Activated B cell treated with CpG ODN at 0.5 μM for 24 hours (primary cell): ENCODE measurements at regions of chr10 and their contacts with region 1.

Region 1: DNA sequence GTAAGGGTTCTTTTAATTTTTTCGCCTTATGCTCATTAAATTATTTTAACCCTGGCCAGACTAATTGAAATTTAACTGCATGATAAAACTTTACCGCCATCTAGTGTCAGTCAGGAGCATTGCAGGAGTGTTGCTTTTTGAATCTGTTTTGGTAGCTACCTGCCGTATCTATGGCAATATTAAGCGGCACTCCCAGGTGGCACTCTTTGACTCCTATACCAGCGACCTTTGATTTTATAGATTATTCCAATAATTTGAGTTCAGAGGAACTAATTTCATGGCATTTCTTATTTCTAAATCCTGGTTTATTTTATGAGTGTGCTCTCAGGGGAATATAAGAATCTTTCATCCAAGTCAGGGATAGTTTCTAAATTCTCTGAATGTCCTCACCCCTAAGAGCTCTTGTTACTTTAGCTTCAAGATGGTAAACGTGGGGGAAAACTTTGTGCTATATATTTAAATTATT is 198.9 kb downstream of the REEP3 start:
- DNase-seq: no peak
- ATAC-seq: peak; percentile 94
- H3K4me3 Mint-ChIP-seq: no peak overlapping the region
- H3K27ac Mint-ChIP-seq: no peak overlapping the region
- H3K4me1 Mint-ChIP-seq: peaks cover 12% of the 10 kb centered on the region
- H3K27me3 Mint-ChIP-seq: peaks cover 12% of the 10 kb centered on the region
- CTCF ChIP-seq: peak; percentile 100

Region 2: GRCh38 chr10:62492012-62492869 is 1227.9 kb before region 1 on chr10:
- CTCF ChIA-PET with region 1: interaction called, 10 read pairs
- POLR2A ChIA-PET with region 1: no interaction called
- intact Hi-C with region 1: no loop called
- DNase-seq: no peak
- ATAC-seq: peak; percentile 49
- H3K4me3 Mint-ChIP-seq: no peak overlapping the region
- H3K27ac Mint-ChIP-seq: no peak overlapping the region
- H3K4me1 Mint-ChIP-seq: peaks cover 27% of the 10 kb centered on the region
- H3K27me3 Mint-ChIP-seq: peaks cover 4% of the 10 kb centered on the region
- CTCF ChIP-seq: no peak

Region 3: DNA sequence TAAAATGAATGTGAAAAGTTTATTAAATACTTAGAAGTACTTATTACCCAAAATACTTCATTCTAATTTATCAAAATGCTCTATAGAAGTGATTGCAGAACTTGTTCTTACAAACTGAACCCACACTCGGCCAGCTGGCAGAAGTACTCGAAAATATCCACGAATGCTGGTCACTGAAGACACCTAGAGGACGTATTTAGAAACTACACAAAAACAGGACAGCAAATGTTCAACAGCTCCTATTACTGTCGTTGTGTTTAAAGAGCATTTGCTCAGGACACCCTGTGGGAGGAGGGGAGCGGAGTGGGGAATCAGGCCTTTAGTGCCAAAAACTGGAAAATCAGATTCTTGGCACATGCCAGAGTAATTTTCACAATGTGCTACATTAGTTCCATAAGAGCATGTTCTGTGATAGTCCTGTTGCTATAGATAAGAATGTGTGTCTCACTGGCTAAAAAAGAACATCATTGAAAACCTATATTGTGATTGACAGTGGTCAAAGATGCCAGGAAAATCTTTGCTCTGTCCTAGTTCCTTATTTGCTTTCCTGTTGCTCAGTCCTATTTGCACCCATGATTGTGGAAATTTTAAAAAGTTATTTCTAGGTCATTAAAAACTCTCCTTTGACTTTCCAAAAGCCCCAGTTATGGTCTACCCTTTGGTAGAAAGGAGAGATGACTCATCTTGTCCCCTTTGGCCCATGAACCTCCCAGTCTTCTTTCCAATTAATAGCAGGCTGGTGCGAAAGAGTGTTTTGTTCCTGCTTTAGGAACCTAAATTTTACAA is 636.0 kb before region 1 on chr10:
- CTCF ChIA-PET with region 1: interaction called, 12 read pairs
- POLR2A ChIA-PET with region 1: no interaction called
- intact Hi-C with region 1: no loop called
- DNase-seq: no peak
- ATAC-seq: peak; percentile 77
- H3K4me3 Mint-ChIP-seq: no peak overlapping the region
- H3K27ac Mint-ChIP-seq: no peak overlapping the region
- H3K4me1 Mint-ChIP-seq: no peaks in the 10 kb centered on the region
- H3K27me3 Mint-ChIP-seq: peaks cover 9% of the 10 kb centered on the region
- CTCF ChIP-seq: peak; percentile 53

Region 4: GRCh38 chr10:63200431-63200830 is 519.7 kb before region 1 on chr10:
- CTCF ChIA-PET with region 1: interaction called, 23 read pairs
- POLR2A ChIA-PET with region 1: no interaction called
- intact Hi-C with region 1: no loop called
- DNase-seq: no peak
- ATAC-seq: no peak
- H3K4me3 Mint-ChIP-seq: no peak overlapping the region
- H3K27ac Mint-ChIP-seq: no peak overlapping the region
- H3K4me1 Mint-ChIP-seq: peaks cover 30% of the 10 kb centered on the region
- H3K27me3 Mint-ChIP-seq: no peaks in the 10 kb centered on the region
- CTCF ChIP-seq: no peak

Region 5: GRCh38 chr10:63465293-63466143 is 254.6 kb before region 1 on chr10 and contains the start of gene JMJD1C:
- CTCF ChIA-PET with region 1: interaction called, 3 read pairs
- POLR2A ChIA-PET with region 1: no interaction called
- intact Hi-C with region 1: loop called (anchors 1 kb)
- DNase-seq: peak; percentile 74
- ATAC-seq: peak; percentile 74
- H3K4me3 Mint-ChIP-seq: peak within 1 kb of the TSS; percentile 97
- H3K27ac Mint-ChIP-seq: peak within 1 kb of the TSS; percentile 92
- H3K4me1 Mint-ChIP-seq: peaks cover 20% of the 10 kb centered on the region
- H3K27me3 Mint-ChIP-seq: no peaks in the 10 kb centered on the region
- CTCF ChIP-seq: no peak
- total RNA-seq, gene JMJD1C: 167 and 176 TPM in 2 replicates

Region 6: GRCh38 chr10:63651864-63652263 is 68.2 kb before region 1 on chr10:
- CTCF ChIA-PET with region 1: no interaction called
- POLR2A ChIA-PET with region 1: no interaction called
- intact Hi-C with region 1: no loop called
- DNase-seq: no peak
- ATAC-seq: no peak
- H3K4me3 Mint-ChIP-seq: no peak overlapping the region
- H3K27ac Mint-ChIP-seq: no peak overlapping the region
- H3K4me1 Mint-ChIP-seq: no peaks in the 10 kb centered on the region
- H3K27me3 Mint-ChIP-seq: no peaks in the 10 kb centered on the region
- CTCF ChIP-seq: no peak

Region 7: DNA sequence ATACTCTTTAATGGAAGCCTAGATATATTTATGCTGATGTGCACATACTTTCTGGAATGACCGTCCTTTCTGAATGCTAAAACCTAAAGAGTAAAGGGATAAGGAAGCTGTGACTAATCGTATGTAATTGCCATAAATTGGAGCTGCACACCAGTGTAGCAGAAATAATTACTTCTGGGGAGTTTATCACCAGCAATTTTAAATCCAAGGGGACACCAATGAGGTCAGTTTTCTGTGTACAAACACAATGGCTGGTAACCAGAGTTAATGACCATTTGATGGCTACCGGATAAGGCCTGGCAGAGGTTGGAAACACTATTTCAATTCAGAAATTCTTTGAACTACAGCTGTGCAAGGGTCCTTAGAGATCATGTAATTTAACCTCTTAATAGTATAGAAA is 471.2 kb after region 1 on chr10:
- CTCF ChIA-PET with region 1: no interaction called
- POLR2A ChIA-PET with region 1: no interaction called
- intact Hi-C with region 1: no loop called
- DNase-seq: no peak
- ATAC-seq: no peak
- H3K4me3 Mint-ChIP-seq: no peak overlapping the region
- H3K27ac Mint-ChIP-seq: no peak overlapping the region
- H3K4me1 Mint-ChIP-seq: no peaks in the 10 kb centered on the region
- H3K27me3 Mint-ChIP-seq: no peaks in the 10 kb centered on the region
- CTCF ChIP-seq: no peak